Caco-2 (cell line): ENCODE measurements at regions of chr3 and their contacts with region 1.

Region 1: GRCh38 chr3:39288300-39288808 is 8.5 kb upstream of the CX3CR1 start:
- DNase-seq: peak; percentile 91
- H3K4me3 ChIP-seq: no peak overlapping the region
- H3K4me3 Mint-ChIP-seq: no peak overlapping the region
- H3K27ac Mint-ChIP-seq: no peak overlapping the region
- H3K4me1 ChIP-seq: peaks cover 17% of the 10 kb centered on the region
- H3K4me1 Mint-ChIP-seq: peaks cover 26% of the 10 kb centered on the region
- H3K27me3 ChIP-seq: no peaks in the 10 kb centered on the region
- H3K27me3 Mint-ChIP-seq: no peaks in the 10 kb centered on the region
- CTCF ChIP-seq: peak; percentile 91 to 95

Region 2: GRCh38 chr3:39000008-39000450 is 288.3 kb before region 1 on chr3:
- CTCF ChIA-PET with region 1: interaction called, 15 read pairs
- POLR2A ChIA-PET with region 1: no interaction called
- intact Hi-C with region 1: loop called (anchors 1 kb)
- DNase-seq: peak in 1 of 2 experiments; percentile 42
- H3K4me3 ChIP-seq: no peak overlapping the region
- H3K4me3 Mint-ChIP-seq: no peak overlapping the region
- H3K27ac Mint-ChIP-seq: no peak overlapping the region
- H3K4me1 ChIP-seq: no peaks in the 10 kb centered on the region
- H3K4me1 Mint-ChIP-seq: no peaks in the 10 kb centered on the region
- H3K27me3 ChIP-seq: no peaks in the 10 kb centered on the region
- H3K27me3 Mint-ChIP-seq: peaks cover 4% of the 10 kb centered on the region
- CTCF ChIP-seq: peak; percentile 81 to 85

Region 3: DNA sequence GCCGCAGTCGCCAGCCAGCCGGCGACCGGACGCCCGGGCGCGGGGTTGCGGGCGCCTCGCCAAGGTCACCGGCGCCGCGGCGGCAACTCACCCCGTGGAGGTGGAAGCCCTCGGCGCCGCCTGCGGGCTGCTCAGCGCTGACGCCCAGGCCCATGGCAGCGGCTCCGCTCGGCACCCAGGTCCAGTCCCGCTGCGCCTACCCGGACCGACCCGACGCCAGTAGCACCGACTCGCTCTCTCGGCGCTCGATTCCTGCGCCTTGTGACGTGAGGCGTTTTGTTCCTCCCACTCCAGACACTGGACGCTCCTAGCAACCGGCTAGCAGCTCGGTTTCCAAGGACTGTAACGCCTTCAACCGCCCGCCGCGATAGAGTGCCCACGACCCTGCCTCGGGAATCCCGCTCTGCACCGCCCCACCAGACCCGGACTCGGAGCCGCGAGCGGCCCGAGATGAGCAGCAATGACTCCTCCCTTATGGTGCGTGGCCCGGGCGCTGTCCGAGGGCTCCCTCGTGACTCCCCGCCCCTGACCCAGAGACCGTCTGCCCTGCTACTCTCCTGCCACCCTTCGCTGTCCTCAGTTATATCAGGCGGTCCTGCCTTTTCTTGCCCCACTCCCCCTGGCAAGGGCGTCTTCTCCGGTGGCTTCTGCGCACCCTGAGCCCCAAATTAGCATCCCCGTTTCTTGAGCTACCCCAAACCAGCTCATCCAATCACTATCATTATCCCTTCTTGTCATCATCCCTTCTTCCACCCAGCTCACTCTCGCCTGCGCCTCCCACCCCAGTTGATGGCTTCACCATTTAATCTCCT is 180.8 kb before region 1 on chr3 and contains the starts of genes GORASP1 and TTC21A:
- CTCF ChIA-PET with region 1: interaction called, 12 read pairs
- POLR2A ChIA-PET with region 1: no interaction called
- intact Hi-C with region 1: no loop called
- DNase-seq: peak; percentile 81 to 86
- H3K4me3 ChIP-seq: peak within 1 kb of the TSS; percentile 98
- H3K4me3 Mint-ChIP-seq: peak within 1 kb of the TSS; percentile 84
- H3K27ac Mint-ChIP-seq: peak within 1 kb of the TSS; percentile 89
- H3K4me1 ChIP-seq: peaks cover 8% of the 10 kb centered on the region; the same call in 1 of the 2 replicates
- H3K4me1 Mint-ChIP-seq: peaks cover 22% of the 10 kb centered on the region
- H3K27me3 ChIP-seq: no peaks in the 10 kb centered on the region
- H3K27me3 Mint-ChIP-seq: no peaks in the 10 kb centered on the region
- CTCF ChIP-seq: no peak
- total RNA-seq, gene GORASP1: 42.2 and 43.6 TPM in 2 replicates
- total RNA-seq, gene TTC21A: 4.0 and 6.9 TPM in 2 replicates

Region 4: GRCh38 chr3:39171860-39172259 is 116.5 kb before region 1 on chr3:
- CTCF ChIA-PET with region 1: interaction called, 10 read pairs
- POLR2A ChIA-PET with region 1: no interaction called
- intact Hi-C with region 1: no loop called
- DNase-seq: no peak
- H3K4me3 ChIP-seq: no peak overlapping the region
- H3K4me3 Mint-ChIP-seq: no peak overlapping the region
- H3K27ac Mint-ChIP-seq: no peak overlapping the region
- H3K4me1 ChIP-seq: peaks cover 4% of the 10 kb centered on the region
- H3K4me1 Mint-ChIP-seq: peaks cover 25% of the 10 kb centered on the region
- H3K27me3 ChIP-seq: no peaks in the 10 kb centered on the region
- H3K27me3 Mint-ChIP-seq: no peaks in the 10 kb centered on the region
- CTCF ChIP-seq: no peak

Region 5: GRCh38 chr3:39189959-39190269 is 98.4 kb before region 1 on chr3:
- CTCF ChIA-PET with region 1: interaction called, 132 read pairs
- POLR2A ChIA-PET with region 1: no interaction called
- intact Hi-C with region 1: loop called (anchors 1 kb)
- DNase-seq: peak; percentile 70 to 75
- H3K4me3 ChIP-seq: no peak overlapping the region
- H3K4me3 Mint-ChIP-seq: no peak overlapping the region
- H3K27ac Mint-ChIP-seq: peak overlapping the region; percentile 22
- H3K4me1 ChIP-seq: peaks cover 26% of the 10 kb centered on the region
- H3K4me1 Mint-ChIP-seq: peaks cover 13% of the 10 kb centered on the region
- H3K27me3 ChIP-seq: no peaks in the 10 kb centered on the region
- H3K27me3 Mint-ChIP-seq: no peaks in the 10 kb centered on the region
- CTCF ChIP-seq: peak; percentile 79 to 85

Region 6: DNA sequence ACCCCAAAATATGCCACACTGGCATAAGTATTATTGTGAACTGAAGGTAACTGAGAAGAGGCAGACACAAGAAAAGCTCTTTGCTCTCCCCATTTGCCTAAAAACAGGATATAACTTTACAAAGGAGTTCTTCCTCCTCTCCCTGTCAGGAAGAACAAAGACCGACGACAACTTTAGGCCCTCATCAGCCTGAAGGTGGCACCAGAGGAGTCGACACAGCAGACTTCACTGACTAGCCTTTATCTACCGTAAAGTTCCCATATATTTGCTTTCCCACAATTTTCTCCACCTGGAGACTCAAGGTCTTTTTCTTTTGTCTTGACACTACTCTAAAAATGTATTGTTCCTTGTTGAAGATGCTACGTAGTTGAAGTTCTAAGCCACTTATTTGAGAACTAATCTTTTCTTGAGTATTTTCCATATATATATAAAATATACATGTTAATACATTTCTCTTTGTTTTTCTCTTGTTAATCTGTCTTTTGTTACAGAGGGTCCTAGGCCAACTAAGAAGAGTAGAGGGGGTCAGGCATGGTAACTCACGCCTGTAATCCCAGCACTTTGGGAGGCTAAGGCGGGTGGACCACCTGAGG is 79.8 kb before region 1 on chr3:
- CTCF ChIA-PET with region 1: interaction called, 6 read pairs
- POLR2A ChIA-PET with region 1: no interaction called
- intact Hi-C with region 1: loop called (anchors 1 kb)
- DNase-seq: peak; percentile 52 to 54
- H3K4me3 ChIP-seq: no peak overlapping the region
- H3K4me3 Mint-ChIP-seq: no peak overlapping the region
- H3K27ac Mint-ChIP-seq: no peak overlapping the region
- H3K4me1 ChIP-seq: 0 out of 2 replicates have a peak, but pooled peaks cover 3% of the 10 kb centered on the region
- H3K4me1 Mint-ChIP-seq: peaks cover 6% of the 10 kb centered on the region
- H3K27me3 ChIP-seq: no peaks in the 10 kb centered on the region; the same call in 1 of the 2 replicates
- H3K27me3 Mint-ChIP-seq: peaks cover 3% of the 10 kb centered on the region
- CTCF ChIP-seq: peak; percentile 43 to 59

Region 7: GRCh38 chr3:39317571-39318169 is 29.3 kb after region 1 on chr3:
- CTCF ChIA-PET with region 1: interaction called, 3 read pairs
- POLR2A ChIA-PET with region 1: no interaction called
- intact Hi-C with region 1: loop called (anchors 1 kb)
- DNase-seq: peak; percentile 74
- H3K4me3 ChIP-seq: no peak overlapping the region
- H3K4me3 Mint-ChIP-seq: peak overlapping the region; percentile 23
- H3K27ac Mint-ChIP-seq: peak overlapping the region; percentile 83
- H3K4me1 ChIP-seq: peaks cover 17% of the 10 kb centered on the region
- H3K4me1 Mint-ChIP-seq: no peaks in the 10 kb centered on the region
- H3K27me3 ChIP-seq: no peaks in the 10 kb centered on the region
- H3K27me3 Mint-ChIP-seq: no peaks in the 10 kb centered on the region
- CTCF ChIP-seq: no peak

Region 8: GRCh38 chr3:39414421-39414907 is 126.1 kb after region 1 on chr3:
- CTCF ChIA-PET with region 1: no interaction called
- POLR2A ChIA-PET with region 1: no interaction called
- intact Hi-C with region 1: no loop called
- DNase-seq: no peak
- H3K4me3 ChIP-seq: no peak overlapping the region
- H3K4me3 Mint-ChIP-seq: no peak overlapping the region
- H3K27ac Mint-ChIP-seq: peak overlapping the region; percentile 39
- H3K4me1 ChIP-seq: peaks cover 6% of the 10 kb centered on the region; the same call in 1 of the 2 replicates
- H3K4me1 Mint-ChIP-seq: peaks cover 17% of the 10 kb centered on the region
- H3K27me3 ChIP-seq: no peaks in the 10 kb centered on the region
- H3K27me3 Mint-ChIP-seq: no peaks in the 10 kb centered on the region
- CTCF ChIP-seq: no peak

Region 9: GRCh38 chr3:39879581-39879980 is 591.2 kb after region 1 on chr3:
- CTCF ChIA-PET with region 1: no interaction called
- POLR2A ChIA-PET with region 1: no interaction called
- intact Hi-C with region 1: no loop called
- DNase-seq: no peak
- H3K4me3 ChIP-seq: no peak overlapping the region
- H3K4me3 Mint-ChIP-seq: no peak overlapping the region
- H3K27ac Mint-ChIP-seq: no peak overlapping the region
- H3K4me1 ChIP-seq: no peaks in the 10 kb centered on the region
- H3K4me1 Mint-ChIP-seq: no peaks in the 10 kb centered on the region
- H3K27me3 ChIP-seq: no peaks in the 10 kb centered on the region
- H3K27me3 Mint-ChIP-seq: no peaks in the 10 kb centered on the region
- CTCF ChIP-seq: no peak